Gastrocnemius medialis (tissue), 4 donors: ENCODE measurements at regions of chr1 and their contacts with region 1.

Region 1: DNA sequence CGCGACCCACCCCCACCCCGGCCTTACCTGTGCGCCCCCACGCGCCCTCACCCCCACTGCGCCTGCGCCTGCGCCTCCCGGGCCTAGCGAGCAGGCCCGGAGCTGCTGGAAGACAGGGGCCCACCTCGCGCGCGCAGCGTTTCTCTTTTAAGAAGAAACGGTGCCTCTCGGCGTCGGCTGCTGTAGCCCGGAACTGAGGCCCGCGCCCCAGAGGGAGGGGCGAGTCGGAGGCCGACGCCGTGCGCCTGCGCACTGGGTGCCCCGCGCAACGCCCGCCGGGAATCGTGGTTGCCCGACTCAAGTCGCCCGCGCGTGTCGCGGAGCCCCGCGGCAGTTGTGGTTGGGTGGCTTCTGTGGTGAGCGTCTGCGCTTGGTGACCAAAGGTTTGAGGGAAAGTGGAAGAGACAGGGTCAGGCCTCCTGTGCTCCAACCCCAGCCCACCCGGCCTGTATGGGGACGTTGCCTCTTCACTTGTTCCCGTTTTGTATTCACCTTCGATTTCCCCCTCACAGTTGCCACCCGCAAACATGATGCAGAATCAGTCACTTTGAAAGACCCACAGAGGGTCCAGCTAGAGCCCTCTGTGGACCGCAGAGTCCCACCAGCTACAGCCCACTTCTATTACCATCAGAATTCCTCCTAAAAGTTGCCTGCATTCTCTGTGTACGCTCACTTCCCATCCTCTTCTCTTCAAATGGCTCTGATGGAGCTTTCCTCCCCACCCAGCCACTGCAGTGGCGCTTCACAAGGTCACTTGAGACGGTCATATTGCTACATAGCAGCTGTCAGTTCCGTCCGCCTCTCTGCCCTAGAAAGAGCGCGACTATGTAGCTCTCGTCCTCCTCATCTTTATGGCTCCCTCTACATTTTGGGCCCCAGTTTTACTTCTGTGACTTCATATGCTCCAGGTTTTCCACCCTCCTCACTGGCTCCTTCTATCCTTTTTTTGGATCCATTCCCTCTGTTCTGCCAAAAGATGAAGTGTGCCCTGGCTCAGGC is at the start of gene ZNF692:
- DNase-seq: peak; percentile 97 to 98
- ATAC-seq: peak; percentile 79 to 85
- H3K4me3 ChIP-seq: peak within 1 kb of the TSS; percentile 68 to 87 (median 72)
- H3K27ac ChIP-seq: peak within 1 kb of the TSS; percentile 86 to 98 (median 94)
- H3K4me1 ChIP-seq: peaks cover 19 to 39% of the 10 kb centered on the region in 2 donors
- H3K27me3 ChIP-seq: no peaks in the 10 kb centered on the region
- CTCF ChIP-seq: peak in 1 of 5 experiments; percentile 5
- POLR2A ChIP-seq: peak; percentile 81 to 85
- total RNA-seq, gene ZNF692: 8.0 to 38.0 (median 13.9) TPM

Region 2: DNA sequence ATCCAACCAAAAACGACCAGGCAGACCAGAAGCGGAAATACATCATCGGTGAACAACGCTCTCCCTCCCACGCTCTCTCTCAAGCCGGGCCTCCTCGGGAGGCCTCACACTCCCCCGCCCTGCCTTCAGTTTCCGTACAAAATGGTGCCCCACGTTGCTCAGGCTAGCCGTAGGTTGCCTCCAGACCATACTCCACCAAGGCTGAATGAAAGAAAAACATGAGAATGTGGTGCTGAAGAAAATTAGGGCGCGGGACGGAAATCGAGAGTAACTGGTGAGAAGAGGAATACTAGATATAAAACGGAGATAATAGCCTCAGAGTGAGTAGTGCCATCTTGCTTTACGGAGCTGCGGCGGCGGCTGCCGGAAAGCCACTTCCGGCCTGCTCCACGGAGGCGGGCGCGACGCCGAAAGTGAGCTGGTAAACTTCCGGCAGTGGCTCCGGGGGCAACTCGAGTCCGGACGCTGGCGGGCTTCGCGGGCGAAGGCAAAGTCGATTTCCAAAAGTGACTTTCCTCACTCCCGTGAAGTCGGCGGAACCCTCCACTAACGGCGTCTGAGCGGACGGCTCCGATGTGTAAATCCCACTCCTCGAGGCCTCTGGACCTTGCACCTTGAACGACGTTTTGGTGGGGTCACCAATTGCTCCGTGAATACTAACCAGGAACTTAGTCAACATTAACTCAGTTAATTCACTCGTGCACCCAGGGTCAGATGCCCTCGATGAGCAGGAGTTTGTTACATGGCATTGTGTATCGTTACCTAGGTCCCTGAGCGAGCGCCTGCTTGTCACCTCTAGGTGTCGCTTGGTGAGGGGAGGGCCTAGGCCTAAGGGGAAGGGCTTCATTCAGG is 33.1 kb before region 1 on chr1 and contains the start of gene SH3BP5L:
- in situ Hi-C with region 1: no loop called
- intact Hi-C with region 1: loop called (anchors 1 kb)
- DNase-seq: peak; percentile 93 to 94
- ATAC-seq: peak; percentile 94 to 96
- H3K4me3 ChIP-seq: peak within 1 kb of the TSS; percentile 75 to 97 (median 94)
- H3K27ac ChIP-seq: peak within 1 kb of the TSS; percentile 95 to 100 (median 98)
- H3K4me1 ChIP-seq: peaks cover 51 to 54% of the 10 kb centered on the region in 2 donors
- H3K27me3 ChIP-seq: no peaks in the 10 kb centered on the region
- CTCF ChIP-seq: peak; percentile 26 to 81 (median 46)
- POLR2A ChIP-seq: peak; percentile 62 to 67
- total RNA-seq, gene SH3BP5L: 15.7 to 26.4 (median 22.8) TPM

Region 3: GRCh38 chr1:248837794-248838356 is 21.3 kb before region 1 on chr1 and contains the start of gene ZNF672:
- in situ Hi-C with region 1: no loop called
- intact Hi-C with region 1: loop called (anchors 1 kb)
- DNase-seq: peak; percentile 98 to 99
- ATAC-seq: peak; percentile 82 to 84
- H3K4me3 ChIP-seq: peak within 1 kb of the TSS; percentile 68 to 98 (median 83)
- H3K27ac ChIP-seq: peak within 1 kb of the TSS; percentile 95 to 100 (median 98)
- H3K4me1 ChIP-seq: peaks cover 37 to 44% of the 10 kb centered on the region in 2 donors
- H3K27me3 ChIP-seq: no peaks in the 10 kb centered on the region
- CTCF ChIP-seq: no peak
- POLR2A ChIP-seq: no peak
- total RNA-seq, gene ZNF672: 41.9 to 81.0 (median 59.0) TPM

Region 4: GRCh38 chr1:248873409-248873992 is 14.3 kb after region 1 on chr1:
- in situ Hi-C with region 1: no loop called
- intact Hi-C with region 1: loop called (anchors 1 kb)
- DNase-seq: peak; percentile 85 to 93
- ATAC-seq: peak; percentile 90 to 92
- H3K4me3 ChIP-seq: peak overlapping the region; percentile 72 to 83 (median 74)
- H3K27ac ChIP-seq: peak overlapping the region; percentile 90 to 98 (median 93)
- H3K4me1 ChIP-seq: no peaks in the 10 kb centered on the region
- H3K27me3 ChIP-seq: no peaks in the 10 kb centered on the region
- CTCF ChIP-seq: no peak
- POLR2A ChIP-seq: peak in 1 of 2 donors; percentile 31

Region 5: GRCh38 chr1:248906009-248906752 is 47.0 kb after region 1 on chr1 and contains the start of gene PGBD2:
- in situ Hi-C with region 1: no loop called
- intact Hi-C with region 1: loop called (anchors 1 kb)
- DNase-seq: peak; percentile 80 to 84
- ATAC-seq: peak; percentile 92 to 94
- H3K4me3 ChIP-seq: peak within 1 kb of the TSS; percentile 65 to 95 (median 84)
- H3K27ac ChIP-seq: peak within 1 kb of the TSS; percentile 82 to 95 (median 87)
- H3K4me1 ChIP-seq: peaks cover 6 to 9% of the 10 kb centered on the region in 2 donors
- H3K27me3 ChIP-seq: peaks cover 0 to 3% (median 0%) of the 10 kb centered on the region in 3 donors
- CTCF ChIP-seq: peak; percentile 17 to 67 (median 63)
- POLR2A ChIP-seq: peak; percentile 59 to 71
- total RNA-seq, gene PGBD2: 0.22 to 2.8 (median 2.0) TPM